Activated CD4-positive, alpha-beta memory T cell treated with anti-CD3 and anti-CD28 coated beads for 36 hours (primary cell): ENCODE measurements at regions of chr12 and their contacts with region 1.

Region 1: GRCh38 chr12:113232840-113233585 is 11.7 kb downstream of the TPCN1 start:
- DNase-seq: peak; percentile 77
- H3K4me3 Mint-ChIP-seq: peak overlapping the region; percentile 43
- H3K27ac Mint-ChIP-seq: peak overlapping the region; percentile 75
- H3K4me1 Mint-ChIP-seq: peaks cover 50% of the 10 kb centered on the region
- H3K27me3 Mint-ChIP-seq: no peaks in the 10 kb centered on the region

Region 2: DNA sequence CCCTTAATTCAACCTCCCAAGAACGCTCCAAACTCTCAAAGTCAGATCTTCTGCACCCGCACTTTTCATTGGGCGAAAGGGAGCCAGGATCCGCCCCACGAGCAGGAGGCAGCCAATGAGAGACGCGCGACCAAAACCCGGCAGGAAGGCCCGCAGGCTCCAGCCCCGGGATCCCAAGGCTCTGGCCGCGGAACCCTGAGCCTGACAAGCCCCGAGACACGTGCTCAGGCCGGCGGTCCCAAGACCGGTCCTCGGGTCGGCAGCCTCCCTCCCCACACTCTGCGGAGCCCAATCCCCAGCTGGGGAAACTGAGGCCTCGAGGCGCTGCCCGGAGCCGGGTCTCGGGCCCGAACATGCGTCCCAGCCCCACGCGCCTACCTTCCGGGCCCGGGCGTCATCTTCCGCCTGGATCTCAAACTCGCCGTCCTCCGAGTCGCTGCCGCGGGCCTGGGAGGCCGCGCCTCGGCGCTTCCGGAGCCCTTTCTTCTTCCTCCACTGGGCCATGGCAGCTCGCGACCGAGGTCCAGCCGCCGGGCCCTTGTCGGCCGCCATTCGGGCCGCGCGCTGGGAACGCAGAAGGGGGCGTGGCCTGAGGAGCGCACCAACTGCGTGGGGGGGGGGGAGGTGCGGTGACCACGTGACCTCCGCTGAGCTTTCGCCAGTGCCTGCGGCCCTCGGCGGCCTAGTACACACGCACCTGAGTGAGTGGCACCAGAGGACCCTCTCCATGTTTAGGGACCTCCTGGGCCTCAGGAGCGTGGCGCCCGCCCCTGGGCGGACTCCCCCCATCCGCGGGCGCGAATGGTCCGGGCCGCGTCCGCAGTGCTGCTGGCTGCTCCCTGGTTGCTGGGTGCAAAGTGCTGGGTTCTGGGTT is 47.9 kb before region 1 on chr12 and contains the starts of genes DDX54 and RITA1:
- CTCF ChIA-PET with region 1: no interaction called
- POLR2A ChIA-PET with region 1: interaction called, 3 read pairs
- intact Hi-C with region 1: loop called (anchors 2 kb)
- DNase-seq: peak; percentile 93
- H3K4me3 Mint-ChIP-seq: peak within 1 kb of the TSS; percentile 94
- H3K27ac Mint-ChIP-seq: peak within 1 kb of the TSS; percentile 93
- H3K4me1 Mint-ChIP-seq: peaks cover 24% of the 10 kb centered on the region
- H3K27me3 Mint-ChIP-seq: no peaks in the 10 kb centered on the region
- total RNA-seq, gene DDX54: 107 to 109 TPM
- total RNA-seq, gene RITA1: 18.7 to 22.0 TPM

Region 3: DNA sequence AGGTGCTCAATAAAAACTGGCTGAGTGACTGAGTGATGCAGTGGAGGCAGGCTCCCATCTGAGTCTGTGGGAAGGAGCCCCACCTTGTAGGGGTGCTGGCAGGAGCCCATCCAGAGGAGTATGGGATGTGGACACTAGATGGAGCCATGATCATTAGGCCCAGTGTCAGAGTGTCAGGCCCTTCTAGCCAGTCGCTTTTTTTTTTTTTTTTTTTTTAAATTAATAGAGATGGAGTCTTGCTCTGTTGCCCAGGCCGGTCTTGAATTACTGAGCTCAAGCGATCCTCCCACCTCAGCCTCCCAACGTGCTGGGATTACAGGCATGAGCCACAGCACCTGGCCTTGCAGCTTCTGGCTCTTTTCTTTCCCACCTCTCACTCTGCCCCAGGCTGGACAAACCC is 36.0 kb before region 1 on chr12:
- CTCF ChIA-PET with region 1: interaction called, 4 read pairs
- POLR2A ChIA-PET with region 1: no interaction called
- intact Hi-C with region 1: loop called (anchors 2 kb)
- DNase-seq: peak; percentile 76
- H3K4me3 Mint-ChIP-seq: no peak overlapping the region
- H3K27ac Mint-ChIP-seq: no peak overlapping the region
- H3K4me1 Mint-ChIP-seq: peaks cover 2% of the 10 kb centered on the region
- H3K27me3 Mint-ChIP-seq: no peaks in the 10 kb centered on the region

Region 4: GRCh38 chr12:113208041-113208934 is 24.7 kb before region 1 on chr12:
- CTCF ChIA-PET with region 1: interaction called, 4 read pairs
- POLR2A ChIA-PET with region 1: interaction called, 3 read pairs
- intact Hi-C with region 1: loop called (anchors 1 kb)
- DNase-seq: peak; percentile 86
- H3K4me3 Mint-ChIP-seq: peak overlapping the region; percentile 38
- H3K27ac Mint-ChIP-seq: peak overlapping the region; percentile 91
- H3K4me1 Mint-ChIP-seq: peaks cover 50% of the 10 kb centered on the region
- H3K27me3 Mint-ChIP-seq: no peaks in the 10 kb centered on the region

Region 5: DNA sequence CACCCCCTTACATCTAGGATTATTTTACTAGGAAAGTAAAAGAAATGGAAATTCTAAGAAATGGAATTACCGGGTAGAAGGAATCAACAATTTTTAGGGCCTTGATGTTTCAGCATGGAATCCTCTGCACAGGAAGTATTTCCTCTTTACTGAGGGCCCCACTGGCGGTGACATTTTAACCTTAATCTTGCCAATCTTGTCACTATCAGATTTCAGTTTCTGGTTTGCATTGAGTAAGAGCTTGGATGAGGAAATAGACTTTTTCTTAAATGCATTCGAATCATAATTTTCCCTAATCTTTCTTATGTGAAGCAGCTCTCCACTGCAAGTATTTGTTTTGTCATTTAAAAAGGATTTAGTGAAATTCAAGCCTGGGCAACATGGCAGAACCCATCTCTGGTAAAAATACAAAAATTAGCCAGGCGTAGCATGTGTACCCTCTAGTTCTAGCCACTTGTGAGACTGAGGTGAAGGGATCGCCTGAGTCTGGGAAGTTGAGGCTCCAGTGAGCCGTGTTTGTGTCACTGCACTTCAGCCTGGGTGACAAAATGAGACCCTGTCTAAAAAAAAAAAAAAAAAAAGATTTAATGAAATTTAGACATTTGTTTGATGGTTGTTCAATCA is 28.9 kb after region 1 on chr12:
- CTCF ChIA-PET with region 1: interaction called, 3 read pairs
- POLR2A ChIA-PET with region 1: interaction called, 3 read pairs
- intact Hi-C with region 1: loop called (anchors 2 kb)
- DNase-seq: peak; percentile 64
- H3K4me3 Mint-ChIP-seq: no peak overlapping the region
- H3K27ac Mint-ChIP-seq: peak overlapping the region; percentile 51
- H3K4me1 Mint-ChIP-seq: peaks cover 46% of the 10 kb centered on the region
- H3K27me3 Mint-ChIP-seq: no peaks in the 10 kb centered on the region